MCF 10A (cell line): ENCODE measurements at regions of chr9 and their contacts with region 1.

Region 1: DNA sequence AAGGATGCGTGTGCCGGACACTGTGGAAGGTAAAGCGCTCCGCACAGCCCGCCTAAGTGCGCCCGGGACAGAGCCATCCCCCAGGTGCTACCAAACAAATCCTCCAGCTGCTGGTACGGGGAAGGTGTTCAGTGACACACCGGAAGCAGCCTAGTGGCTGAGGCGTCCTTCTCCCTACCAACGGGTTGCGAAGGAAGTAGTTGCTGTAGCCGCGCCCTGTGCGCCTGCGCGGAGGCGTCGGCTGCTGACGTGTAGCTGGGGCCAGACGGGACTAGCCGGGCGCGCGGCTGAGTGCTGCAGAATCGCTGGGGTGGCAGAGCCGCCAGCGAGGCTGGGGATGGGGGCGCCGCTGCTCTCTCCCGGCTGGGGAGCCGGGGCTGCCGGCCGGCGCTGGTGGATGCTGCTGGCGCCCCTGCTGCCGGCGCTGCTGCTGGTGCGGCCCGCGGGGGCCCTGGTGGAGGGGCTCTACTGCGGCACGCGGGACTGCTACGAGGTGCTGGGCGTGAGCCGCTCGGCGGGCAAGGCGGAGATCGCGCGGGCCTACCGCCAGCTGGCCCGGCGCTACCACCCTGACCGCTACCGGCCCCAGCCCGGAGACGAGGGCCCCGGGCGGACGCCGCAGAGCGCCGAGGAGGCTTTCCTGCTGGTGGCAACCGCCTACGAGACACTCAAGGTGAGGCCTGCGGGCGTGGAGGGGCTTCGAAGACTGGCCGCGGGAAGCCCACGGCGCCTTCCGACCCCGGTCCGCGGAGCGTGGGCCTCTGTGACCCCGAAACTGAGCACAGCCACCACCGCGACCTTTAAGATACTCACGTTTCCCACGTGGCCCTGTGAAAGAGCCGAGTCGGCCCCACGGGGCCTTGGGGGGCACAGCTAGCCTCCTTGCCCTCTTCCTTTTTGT is at the start of gene DNAJC25:
- DNase-seq: peak; percentile 98
- H3K4me3 Mint-ChIP-seq: peak within 1 kb of the TSS; percentile 99
- H3K27ac Mint-ChIP-seq: peak within 1 kb of the TSS; percentile 82
- H3K4me1 Mint-ChIP-seq: peaks cover 37% of the 10 kb centered on the region
- H3K27me3 Mint-ChIP-seq: no peaks in the 10 kb centered on the region
- CTCF ChIP-seq: no peak
- total RNA-seq, gene DNAJC25: 10.9 and 11.6 TPM in 2 replicates

Region 2: DNA sequence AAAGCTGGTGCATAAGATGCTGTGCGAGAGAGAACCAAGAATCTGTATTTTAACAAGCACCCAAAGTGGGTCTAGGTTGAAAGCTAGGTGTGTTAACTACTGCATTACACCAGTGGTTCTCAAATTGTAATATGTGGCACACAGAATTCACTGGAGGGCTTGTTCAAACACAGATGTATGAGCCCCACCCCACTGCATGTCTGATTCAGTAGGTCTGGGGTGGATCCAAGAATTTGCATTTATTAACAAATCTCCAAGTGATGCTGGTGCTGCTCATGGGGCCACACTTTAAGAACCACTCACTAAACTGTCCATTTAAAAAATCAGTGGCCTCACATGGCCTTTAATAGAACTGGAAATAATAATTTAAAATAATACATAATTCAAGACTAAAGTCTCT is 633.5 kb before region 1 on chr9:
- CTCF ChIA-PET with region 1: no interaction called
- POLR2A ChIA-PET with region 1: no interaction called
- intact Hi-C with region 1: no loop called
- DNase-seq: no peak
- H3K4me3 Mint-ChIP-seq: no peak overlapping the region
- H3K27ac Mint-ChIP-seq: no peak overlapping the region
- H3K4me1 Mint-ChIP-seq: no peaks in the 10 kb centered on the region
- H3K27me3 Mint-ChIP-seq: no peaks in the 10 kb centered on the region
- CTCF ChIP-seq: no peak

Region 3: GRCh38 chr9:111613441-111614039 is 17.8 kb before region 1 on chr9:
- CTCF ChIA-PET with region 1: no interaction called
- POLR2A ChIA-PET with region 1: interaction called, 11 read pairs
- intact Hi-C with region 1: no loop called
- DNase-seq: peak; percentile 13
- H3K4me3 Mint-ChIP-seq: no peak overlapping the region
- H3K27ac Mint-ChIP-seq: no peak overlapping the region
- H3K4me1 Mint-ChIP-seq: peaks cover 7% of the 10 kb centered on the region
- H3K27me3 Mint-ChIP-seq: peaks cover 12% of the 10 kb centered on the region
- CTCF ChIP-seq: no peak

Region 4: DNA sequence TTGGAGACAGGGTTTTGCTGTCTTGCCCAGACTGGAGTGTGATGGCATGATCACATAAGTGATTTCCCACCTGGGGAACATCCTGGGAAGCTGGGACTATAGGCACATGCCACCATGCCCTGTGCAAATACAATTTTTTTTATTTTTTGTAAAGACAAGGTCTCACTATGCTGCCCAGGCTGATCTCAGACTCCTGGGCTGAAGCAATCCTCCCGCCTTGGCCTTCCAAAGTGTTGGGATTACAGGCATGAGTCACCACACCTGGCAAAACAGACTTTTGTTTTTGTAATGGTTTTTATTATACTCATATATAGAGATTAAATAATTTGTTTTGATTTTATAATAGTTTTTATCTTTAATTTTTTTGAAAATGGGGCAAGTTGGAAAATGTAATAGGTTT is 14.5 kb after region 1 on chr9:
- CTCF ChIA-PET with region 1: no interaction called
- POLR2A ChIA-PET with region 1: interaction called, 38 read pairs
- intact Hi-C with region 1: no loop called
- DNase-seq: peak; percentile 61
- H3K4me3 Mint-ChIP-seq: no peak overlapping the region
- H3K27ac Mint-ChIP-seq: peak overlapping the region; percentile 37
- H3K4me1 Mint-ChIP-seq: peaks cover 4% of the 10 kb centered on the region
- H3K27me3 Mint-ChIP-seq: no peaks in the 10 kb centered on the region
- CTCF ChIP-seq: no peak

Region 5: GRCh38 chr9:111661150-111661801 is 30.0 kb after region 1 on chr9 and contains the start of gene GNG10:
- CTCF ChIA-PET with region 1: interaction called, 3 read pairs
- POLR2A ChIA-PET with region 1: interaction called, 37 read pairs
- intact Hi-C with region 1: no loop called
- DNase-seq: peak; percentile 61
- H3K4me3 Mint-ChIP-seq: peak within 1 kb of the TSS; percentile 87
- H3K27ac Mint-ChIP-seq: peak within 1 kb of the TSS; percentile 93
- H3K4me1 Mint-ChIP-seq: peaks cover 19% of the 10 kb centered on the region
- H3K27me3 Mint-ChIP-seq: no peaks in the 10 kb centered on the region
- CTCF ChIP-seq: no peak
- total RNA-seq, gene GNG10: 42.0 and 61.7 TPM in 2 replicates

Region 6: DNA sequence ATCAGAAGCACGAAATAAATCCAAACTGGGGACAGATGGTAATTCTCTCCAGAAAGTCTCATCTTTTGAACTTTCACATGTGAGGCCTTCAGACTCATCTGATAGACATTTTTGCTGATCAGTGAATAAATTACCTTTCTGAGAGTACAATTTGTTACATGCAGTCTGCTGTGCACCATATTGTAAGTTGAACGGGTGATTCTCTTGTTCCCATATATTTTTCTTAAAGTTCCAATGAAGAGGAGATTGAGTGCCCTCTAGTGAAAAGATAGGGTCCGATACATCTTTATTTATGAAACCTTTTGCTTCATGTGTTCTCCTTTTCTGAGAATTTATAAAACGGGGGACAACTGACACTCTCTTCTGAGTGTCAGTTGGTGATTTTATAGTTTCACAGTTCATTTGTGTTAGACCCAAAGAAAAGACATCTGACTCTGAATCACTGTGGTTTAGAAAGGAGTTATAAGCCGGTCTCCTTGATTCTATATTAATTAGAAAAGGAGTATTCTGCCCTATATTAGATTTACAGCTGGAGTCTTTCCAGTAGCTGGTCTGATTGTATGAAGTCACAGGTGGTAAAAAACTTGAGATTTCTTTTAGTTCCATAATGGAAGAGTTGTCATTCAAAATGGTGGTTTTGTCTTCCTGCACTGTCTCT is 60.5 kb after region 1 on chr9:
- CTCF ChIA-PET with region 1: interaction called, 5 read pairs
- POLR2A ChIA-PET with region 1: interaction called, 4 read pairs
- intact Hi-C with region 1: loop called (anchors 5 kb)
- DNase-seq: peak; percentile 52
- H3K4me3 Mint-ChIP-seq: no peak overlapping the region
- H3K27ac Mint-ChIP-seq: peak overlapping the region; percentile 27
- H3K4me1 Mint-ChIP-seq: no peaks in the 10 kb centered on the region
- H3K27me3 Mint-ChIP-seq: no peaks in the 10 kb centered on the region
- CTCF ChIP-seq: peak; percentile 29

Region 7: GRCh38 chr9:111743275-111743674 is 112.0 kb after region 1 on chr9:
- CTCF ChIA-PET with region 1: no interaction called
- POLR2A ChIA-PET with region 1: interaction called, 15 read pairs
- intact Hi-C with region 1: no loop called
- DNase-seq: peak; percentile 94
- H3K4me3 Mint-ChIP-seq: peak overlapping the region; percentile 53
- H3K27ac Mint-ChIP-seq: peak overlapping the region; percentile 99
- H3K4me1 Mint-ChIP-seq: peaks cover 17% of the 10 kb centered on the region
- H3K27me3 Mint-ChIP-seq: no peaks in the 10 kb centered on the region
- CTCF ChIP-seq: no peak